HEK293T (cell line): ENCODE measurements at regions of chr7 and their contacts with region 1.

Region 1: DNA sequence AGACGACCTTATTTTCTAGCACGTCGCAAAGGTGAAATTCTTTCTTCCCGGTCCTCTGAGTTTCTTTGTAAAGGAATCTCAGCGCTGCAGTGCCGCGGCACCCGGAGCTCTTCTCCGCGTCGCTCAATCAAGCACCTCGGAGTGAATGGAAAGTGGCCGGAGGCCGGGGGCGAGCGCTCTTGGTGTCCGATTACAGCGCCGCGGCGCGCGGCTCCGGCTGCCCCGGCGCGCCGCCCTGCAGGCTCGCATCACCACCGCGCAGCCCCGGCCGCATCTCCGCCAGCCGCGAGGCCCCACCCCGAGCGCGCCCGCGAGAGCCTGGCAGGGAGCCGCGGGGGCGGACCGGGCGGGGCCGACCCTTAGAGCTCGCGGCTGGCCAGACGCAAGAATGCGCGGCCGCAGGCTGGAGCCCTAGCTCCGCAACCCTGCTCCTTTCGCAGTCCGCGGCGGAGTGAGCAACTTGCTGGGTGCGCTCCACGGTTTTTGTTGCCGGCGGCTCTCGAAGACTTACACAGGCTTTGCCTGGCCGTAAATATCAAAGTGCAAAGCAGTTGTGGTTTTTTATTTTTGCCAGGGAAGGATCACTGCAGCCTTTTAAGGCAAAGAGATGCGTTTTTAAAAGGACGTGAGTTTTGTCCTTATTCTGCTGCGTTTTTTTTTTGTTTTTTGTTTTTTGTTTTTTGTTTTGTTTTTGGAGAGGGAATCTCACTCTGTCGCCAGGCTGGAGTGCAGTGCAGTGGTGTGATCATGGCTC is at the start of gene SEMA3C:
- DNase-seq: peak; percentile 82

Region 2: DNA sequence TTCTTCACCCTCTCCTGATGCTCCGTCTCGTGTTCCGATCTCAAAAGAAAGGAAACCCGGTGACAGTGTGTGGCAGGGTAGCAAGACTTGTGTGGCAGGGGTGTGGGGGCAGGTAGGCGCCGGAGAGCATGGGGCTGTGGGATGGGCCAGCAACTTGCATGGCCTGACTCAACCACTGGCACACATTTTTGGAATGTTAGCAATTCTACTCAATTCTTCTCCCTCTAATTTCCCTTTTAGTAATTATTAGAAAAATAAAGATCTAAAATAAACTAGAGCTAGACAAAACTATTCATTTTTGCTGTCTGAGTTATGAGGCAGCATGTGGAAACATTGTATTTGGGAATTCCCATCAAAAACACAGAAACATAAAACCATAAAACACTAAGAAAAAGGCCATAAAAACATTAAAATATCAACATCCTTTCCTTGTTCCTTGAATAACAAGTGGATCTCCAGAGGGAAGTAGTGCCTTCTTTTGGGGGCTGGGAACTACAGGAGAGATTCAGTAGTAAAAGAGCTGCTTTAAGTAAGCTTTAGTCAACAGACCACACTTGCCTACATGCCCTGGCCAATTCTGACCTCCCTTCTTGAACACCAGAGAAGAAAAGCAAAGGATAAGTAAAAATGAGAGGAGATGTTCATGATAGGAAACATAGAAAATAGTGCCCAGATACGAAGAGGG is 22.0 kb before region 1 on chr7:
- CTCF ChIA-PET with region 1: no interaction called
- POLR2A ChIA-PET with region 1: no interaction called
- DNase-seq: no peak

Region 3: DNA sequence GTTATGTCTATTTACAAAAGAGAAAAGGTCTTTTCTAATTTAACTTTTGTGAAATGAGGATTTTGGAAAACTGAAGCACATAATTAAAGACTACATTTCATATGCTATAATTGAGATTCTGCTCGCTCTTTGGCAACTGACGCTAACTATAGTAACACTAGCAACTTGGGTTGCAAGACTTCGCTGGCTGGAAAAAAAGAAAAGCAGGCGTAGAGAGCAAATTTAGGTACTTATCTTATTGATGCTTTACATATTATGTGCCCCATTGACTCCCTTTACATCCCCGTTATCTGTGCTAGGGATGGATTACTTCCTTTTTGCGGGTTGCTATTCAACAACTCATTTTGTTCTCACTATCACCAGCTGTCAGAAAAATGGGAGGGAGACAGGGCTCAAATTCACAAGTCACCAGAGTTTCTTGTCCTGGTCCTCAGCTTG is 10.7 kb before region 1 on chr7:
- CTCF ChIA-PET with region 1: interaction called, 6 read pairs
- POLR2A ChIA-PET with region 1: interaction called, 14 read pairs
- DNase-seq: no peak

Region 4: DNA sequence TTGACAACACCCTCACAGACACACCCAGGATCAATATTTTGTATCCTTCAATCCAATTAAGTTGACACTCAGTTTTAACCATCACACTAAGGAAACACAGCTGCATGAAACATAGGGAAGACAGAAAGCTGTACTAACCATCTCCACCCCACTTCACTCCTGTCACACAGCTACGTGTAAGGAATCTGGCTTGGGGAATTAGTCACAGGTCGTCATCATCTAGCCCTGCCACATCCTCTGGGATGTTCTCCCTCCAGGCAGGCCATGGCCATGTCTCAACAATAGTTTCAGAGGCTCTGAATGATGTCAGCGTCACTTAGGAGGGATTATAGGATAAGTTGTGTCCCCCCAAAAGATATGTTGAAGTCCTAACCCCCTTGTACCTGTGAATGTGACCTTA is 10.5 kb after region 1 on chr7:
- CTCF ChIA-PET with region 1: interaction called, 11 read pairs
- POLR2A ChIA-PET with region 1: interaction called, 3 read pairs
- DNase-seq: no peak